Ovary (tissue), 10 donors: ENCODE measurements at regions of chr6 and their contacts with region 1.

Region 1: GRCh38 chr6:8277769-8278168 is 157.6 kb downstream of the SLC35B3 start:
- DNase-seq: no peak
- H3K4me3 ChIP-seq: no peak overlapping the region
- H3K27ac ChIP-seq: no peak overlapping the region
- H3K4me1 ChIP-seq: no peaks in the 10 kb centered on the region
- H3K27me3 ChIP-seq: no peaks in the 10 kb centered on the region
- CTCF ChIP-seq: no peak
- EP300 ChIP-seq: no peak
- POLR2A ChIP-seq: no peak

Region 2: DNA sequence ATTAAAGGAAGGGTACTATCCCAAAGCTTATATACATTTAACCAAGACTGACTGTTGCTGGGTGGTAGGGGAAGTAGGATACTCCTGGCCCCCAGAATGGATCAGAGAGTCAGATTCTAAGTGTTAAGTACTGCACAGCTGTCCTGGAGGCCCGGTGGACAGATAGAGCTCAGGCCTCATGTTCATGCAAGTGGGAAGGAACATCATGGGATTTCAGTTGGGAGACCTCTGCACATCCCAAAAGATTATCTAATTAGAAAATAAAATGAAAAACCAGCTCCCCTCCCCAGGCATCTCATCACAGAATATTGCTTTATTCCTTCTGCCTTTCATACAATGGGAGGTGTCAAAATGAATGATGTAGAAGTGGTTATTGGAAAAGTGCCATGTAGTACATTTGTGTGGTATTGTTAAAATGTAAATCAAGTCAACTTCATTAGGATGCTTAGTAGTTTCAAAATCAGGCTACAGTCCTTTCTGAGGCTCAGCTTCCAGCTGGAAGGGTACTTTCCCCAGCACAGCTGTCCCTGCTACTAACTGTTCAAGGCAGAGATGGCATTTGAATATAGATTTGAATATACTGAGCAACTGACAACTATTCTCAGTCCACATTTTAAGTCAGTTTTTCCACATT is 74.7 kb after region 1 on chr6:
- intact Hi-C with region 1: loop called in 1 of 4 experiments (anchors 2 kb)
- DNase-seq: no peak
- H3K4me3 ChIP-seq: no peak overlapping the region
- H3K27ac ChIP-seq: no peak overlapping the region
- H3K4me1 ChIP-seq: no peaks in the 10 kb centered on the region
- H3K27me3 ChIP-seq: no peaks in the 10 kb centered on the region
- CTCF ChIP-seq: no peak
- EP300 ChIP-seq: no peak
- POLR2A ChIP-seq: no peak

Region 3: DNA sequence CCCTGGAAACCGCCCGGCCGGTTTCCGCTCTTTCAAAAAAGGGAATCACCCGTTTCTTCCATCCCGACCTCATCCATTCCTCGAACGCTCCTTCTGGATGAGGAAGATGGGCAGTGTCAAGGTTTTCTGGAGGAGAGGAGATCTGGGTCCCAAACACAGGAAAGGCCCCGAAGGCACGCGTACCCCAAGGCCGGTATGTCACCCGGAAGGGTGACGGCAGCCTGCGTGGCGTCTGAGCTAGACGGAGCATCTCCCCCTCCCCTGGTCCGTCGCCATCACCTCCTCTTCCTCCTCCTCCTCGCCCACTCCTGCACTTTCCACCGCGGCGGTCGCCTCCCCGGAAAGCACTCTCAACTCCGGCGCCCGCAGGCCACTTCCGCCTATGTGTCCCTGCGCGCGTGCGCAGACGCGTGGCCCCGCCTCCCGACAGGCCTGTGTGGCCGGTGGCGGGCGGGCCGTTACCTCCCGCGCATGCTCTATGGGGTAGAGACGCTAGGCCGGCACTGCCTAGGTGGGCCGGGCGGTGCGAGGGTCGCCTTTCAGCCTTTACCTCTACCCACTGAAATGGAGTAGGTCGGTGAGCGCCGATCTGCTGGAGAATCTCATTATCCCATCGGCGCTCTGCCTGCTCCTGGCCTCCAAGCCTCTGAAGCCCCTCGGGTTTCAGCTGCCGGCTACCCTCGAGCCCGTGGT is 157.5 kb after region 1 on chr6 and contains the start of gene SLC35B3:
- intact Hi-C with region 1: no loop called
- DNase-seq: peak; percentile 93 to 98 (median 97)
- H3K4me3 ChIP-seq: peak within 1 kb of the TSS; percentile 85
- H3K27ac ChIP-seq: peak within 1 kb of the TSS in 1 of 2 donors; percentile 69
- H3K4me1 ChIP-seq: peaks cover 5% of the 10 kb centered on the region
- H3K27me3 ChIP-seq: no peaks in the 10 kb centered on the region
- CTCF ChIP-seq: no peak
- EP300 ChIP-seq: no peak
- POLR2A ChIP-seq: peak; percentile 78
- total RNA-seq, gene SLC35B3: 4.6 to 13.8 (median 9.9) TPM